ENCODE measurements at regions of chr1 and their contacts with region 1.

Region 1: GRCh38 chr1:108559215-108560186 is at the start of gene EEIG2:
- H3K4me3 Mint-ChIP-seq: peak within 1 kb of the TSS; percentile 97
- H3K27ac Mint-ChIP-seq: peak within 1 kb of the TSS; percentile 95
- H3K4me1 Mint-ChIP-seq: peaks cover 45% of the 10 kb centered on the region
- H3K27me3 Mint-ChIP-seq: no peaks in the 10 kb centered on the region

Region 2: GRCh38 chr1:108512239-108512981 is 47.1 kb before region 1 on chr1:
- intact Hi-C with region 1: loop called (anchors 1 kb)
- H3K4me3 Mint-ChIP-seq: no peak overlapping the region
- H3K27ac Mint-ChIP-seq: no peak overlapping the region
- H3K4me1 Mint-ChIP-seq: peaks cover 5% of the 10 kb centered on the region
- H3K27me3 Mint-ChIP-seq: peaks cover 11% of the 10 kb centered on the region

Region 3: GRCh38 chr1:108691942-108692723 is 132.6 kb after region 1 on chr1 and contains the start of gene PRPF38B:
- intact Hi-C with region 1: loop called (anchors 5 kb)
- H3K4me3 Mint-ChIP-seq: peak within 1 kb of the TSS; percentile 96
- H3K27ac Mint-ChIP-seq: peak within 1 kb of the TSS; percentile 100
- H3K4me1 Mint-ChIP-seq: peaks cover 21% of the 10 kb centered on the region
- H3K27me3 Mint-ChIP-seq: no peaks in the 10 kb centered on the region

Region 4: DNA sequence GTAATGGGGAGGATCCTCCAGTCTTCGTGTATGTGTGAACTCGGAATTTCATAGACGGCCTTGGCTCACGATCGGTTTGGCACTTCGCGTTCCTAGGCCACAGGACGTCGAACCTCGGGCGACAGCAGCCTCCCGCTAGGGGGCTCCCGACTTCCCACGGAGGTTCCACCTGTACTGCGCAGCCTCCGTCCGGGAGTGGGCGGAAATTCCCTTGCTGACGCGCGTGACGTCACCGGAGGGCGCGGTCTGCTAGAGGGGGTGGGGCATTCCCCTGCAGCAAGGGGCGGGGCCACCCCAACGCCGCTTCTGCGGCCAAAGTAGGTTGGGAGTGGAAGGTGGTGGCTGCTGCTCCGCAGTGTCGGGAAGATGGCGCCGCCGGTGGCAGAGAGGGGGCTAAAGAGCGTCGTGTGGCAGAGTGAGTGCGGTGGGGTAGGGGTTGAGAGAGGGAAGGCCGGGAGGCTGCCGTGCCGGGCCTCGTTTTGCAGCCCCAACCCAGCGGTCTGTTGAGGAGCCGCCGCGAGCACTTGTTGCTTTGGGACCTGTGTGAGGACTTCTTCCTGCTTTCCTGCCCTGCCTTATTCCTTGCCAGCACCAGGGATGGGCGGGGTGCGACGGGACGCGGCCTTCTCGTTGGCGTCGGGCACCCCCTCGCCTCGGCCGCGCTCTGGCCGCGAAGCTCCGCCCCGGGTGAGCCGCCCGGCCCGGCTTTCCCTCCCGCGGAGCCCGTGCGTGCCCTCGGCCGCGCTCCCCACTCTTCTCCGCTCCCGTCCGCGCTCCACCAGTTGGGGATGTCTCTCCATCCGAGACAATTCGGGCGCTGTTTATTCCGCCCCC is 187.1 kb after region 1 on chr1 and contains the start of gene STXBP3:
- intact Hi-C with region 1: loop called (anchors 2 kb)
- H3K4me3 Mint-ChIP-seq: peak within 1 kb of the TSS; percentile 91
- H3K27ac Mint-ChIP-seq: peak within 1 kb of the TSS; percentile 100
- H3K4me1 Mint-ChIP-seq: peaks cover 38% of the 10 kb centered on the region
- H3K27me3 Mint-ChIP-seq: peaks cover 2% of the 10 kb centered on the region

Measured in dendritic cell treated with granulocyte-macrophage colony-stimulating factor and Interleukin-4, amounts not matched to agents 40 ng/mL and 50 ng/mL, for 4 days (primary cell).